ENCODE measurements at regions of chr6 and their contacts with region 1.

Region 1: GRCh38 chr6:31739639-31740396 is at the start of gene MSH5:
- DNase-seq: peak; percentile 98
- ATAC-seq: peak; percentile 87
- H3K4me3 Mint-ChIP-seq: peak within 1 kb of the TSS; percentile 96
- H3K27ac Mint-ChIP-seq: peak within 1 kb of the TSS; percentile 86
- H3K4me1 Mint-ChIP-seq: peaks cover 46% of the 10 kb centered on the region
- H3K27me3 Mint-ChIP-seq: no peaks in the 10 kb centered on the region
- total RNA-seq, gene MSH5: 92.1 to 126 TPM

Region 2: DNA sequence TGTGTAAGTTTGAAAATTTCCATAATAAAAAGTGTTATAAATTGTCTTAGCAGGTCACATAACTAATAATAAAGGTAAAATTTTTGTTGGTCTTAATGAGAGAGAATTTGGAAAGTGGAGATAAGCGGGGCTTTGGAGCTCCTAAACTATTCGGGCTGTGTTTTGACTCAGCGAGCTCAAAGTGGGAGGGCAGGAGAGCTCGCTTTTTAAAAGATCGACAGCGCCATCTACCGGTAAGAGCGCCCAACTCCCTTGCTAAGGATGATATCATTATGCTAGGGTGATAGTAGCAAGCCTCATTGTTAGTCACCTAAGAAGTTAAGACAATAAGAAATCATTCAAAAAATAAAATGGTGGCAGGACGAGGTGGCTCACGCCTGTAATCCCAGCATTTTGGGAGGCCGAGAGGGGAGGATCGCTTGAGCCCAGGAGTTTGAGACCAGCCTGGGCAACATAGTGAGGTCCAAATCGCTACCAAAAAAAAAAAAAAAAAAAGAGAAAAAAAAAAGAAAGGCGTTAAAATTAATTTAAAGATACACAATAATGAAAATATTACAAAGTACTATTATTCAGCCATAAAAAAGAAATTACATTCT is 652.2 kb before region 1 on chr6:
- CTCF ChIA-PET with region 1: no interaction called
- POLR2A ChIA-PET with region 1: no interaction called
- intact Hi-C with region 1: no loop called
- DNase-seq: peak; percentile 94
- ATAC-seq: peak; percentile 96
- H3K4me3 Mint-ChIP-seq: no peak overlapping the region
- H3K27ac Mint-ChIP-seq: no peak overlapping the region
- H3K4me1 Mint-ChIP-seq: peaks cover 13% of the 10 kb centered on the region
- H3K27me3 Mint-ChIP-seq: no peaks in the 10 kb centered on the region

Region 3: DNA sequence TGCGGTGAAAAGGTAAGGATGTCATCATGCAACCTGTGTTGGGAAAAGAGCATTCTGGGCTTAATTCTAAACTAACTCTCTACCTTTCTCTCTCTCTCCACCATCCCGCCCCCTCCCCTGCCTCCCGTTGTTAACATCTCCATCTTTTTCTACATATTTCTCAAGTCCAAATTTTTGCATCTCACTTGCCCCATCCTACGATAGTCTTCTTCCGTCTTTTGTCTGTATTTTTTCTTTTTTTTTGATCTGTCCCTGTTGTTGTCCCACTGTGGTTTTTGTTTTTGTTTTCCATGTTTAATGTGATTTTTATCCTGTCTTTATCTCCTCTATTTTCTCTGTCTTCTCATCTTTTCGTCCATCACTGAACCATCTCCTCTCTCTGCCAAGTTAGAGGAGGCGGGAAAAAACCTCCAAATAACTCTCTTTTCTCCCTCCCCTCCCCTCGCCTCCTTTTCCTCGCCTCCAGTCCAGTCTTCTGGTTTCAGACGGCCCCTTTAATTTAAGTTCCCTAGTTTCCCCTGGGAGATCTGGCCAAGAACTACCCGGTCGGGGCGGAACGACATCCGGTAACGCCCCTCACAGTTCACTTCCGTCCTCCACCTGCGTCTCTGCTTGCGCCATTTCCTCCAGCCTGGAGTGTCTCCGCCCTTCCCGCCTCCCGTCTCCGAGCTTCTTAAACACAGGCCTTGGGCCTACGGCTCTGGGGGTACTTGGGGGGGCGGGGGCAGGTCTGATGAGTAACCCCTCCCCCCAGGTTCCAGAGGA is 192.7 kb before region 1 on chr6 and contains the start of gene NFKBIL1:
- CTCF ChIA-PET with region 1: interaction called, 5 read pairs
- POLR2A ChIA-PET with region 1: no interaction called
- intact Hi-C with region 1: loop called in 1 of 2 experiments (anchors 2 kb)
- DNase-seq: peak; percentile 95
- ATAC-seq: peak; percentile 77
- H3K4me3 Mint-ChIP-seq: peak within 1 kb of the TSS; percentile 89
- H3K27ac Mint-ChIP-seq: peak within 1 kb of the TSS; percentile 97
- H3K4me1 Mint-ChIP-seq: peaks cover 51% of the 10 kb centered on the region
- H3K27me3 Mint-ChIP-seq: no peaks in the 10 kb centered on the region
- total RNA-seq, gene NFKBIL1: 18.1 to 19.0 TPM

Region 4: DNA sequence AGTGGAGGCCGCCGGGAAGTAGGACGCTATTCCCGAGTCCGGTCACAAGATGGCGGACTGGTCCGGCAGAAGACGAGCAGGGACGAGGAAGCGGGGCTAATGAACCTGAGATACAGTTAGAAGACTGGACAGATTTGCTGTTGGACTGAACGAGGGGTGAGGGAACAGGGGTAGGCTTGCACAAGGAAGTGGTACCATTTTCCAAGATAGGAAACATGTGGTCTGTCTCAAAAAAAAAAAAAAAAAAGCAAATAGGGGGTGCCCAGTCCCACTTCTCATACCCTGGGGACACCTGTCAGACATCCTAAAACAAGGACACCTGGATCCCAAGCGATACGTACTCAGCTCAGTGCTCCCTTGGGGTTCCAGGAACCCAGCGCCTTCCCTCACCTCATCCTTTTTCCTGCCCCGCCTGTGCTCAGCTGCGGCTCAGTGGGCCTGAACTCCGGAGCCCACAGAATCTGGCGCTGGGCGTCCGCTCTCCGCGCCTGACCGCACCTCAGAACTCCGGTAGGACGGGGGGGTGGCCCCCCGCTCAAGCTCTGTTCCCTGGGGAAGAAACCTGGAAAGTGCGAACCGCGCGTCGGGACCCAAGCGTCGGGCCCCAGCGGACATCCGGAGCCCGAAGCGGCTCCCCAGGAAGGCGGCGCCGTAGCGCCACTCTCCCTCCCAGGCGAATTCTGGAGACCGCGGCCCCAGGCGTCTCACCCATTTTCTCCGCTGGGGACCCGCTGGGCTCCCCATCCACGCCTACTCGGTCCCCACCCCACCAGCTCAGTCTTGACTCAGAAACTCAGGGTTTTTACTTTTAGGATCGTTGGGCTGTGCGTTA is 58.8 kb before region 1 on chr6 and contains the start of gene LY6G5C:
- CTCF ChIA-PET with region 1: no interaction called
- POLR2A ChIA-PET with region 1: interaction called, 3 read pairs
- intact Hi-C with region 1: loop called (anchors 2 kb)
- DNase-seq: peak; percentile 80
- ATAC-seq: peak; percentile 80
- H3K4me3 Mint-ChIP-seq: peak within 1 kb of the TSS; percentile 66
- H3K27ac Mint-ChIP-seq: peak within 1 kb of the TSS; percentile 49
- H3K4me1 Mint-ChIP-seq: peaks cover 15% of the 10 kb centered on the region
- H3K27me3 Mint-ChIP-seq: no peaks in the 10 kb centered on the region
- total RNA-seq, gene LY6G5C: 1.2 to 1.5 TPM

Region 5: DNA sequence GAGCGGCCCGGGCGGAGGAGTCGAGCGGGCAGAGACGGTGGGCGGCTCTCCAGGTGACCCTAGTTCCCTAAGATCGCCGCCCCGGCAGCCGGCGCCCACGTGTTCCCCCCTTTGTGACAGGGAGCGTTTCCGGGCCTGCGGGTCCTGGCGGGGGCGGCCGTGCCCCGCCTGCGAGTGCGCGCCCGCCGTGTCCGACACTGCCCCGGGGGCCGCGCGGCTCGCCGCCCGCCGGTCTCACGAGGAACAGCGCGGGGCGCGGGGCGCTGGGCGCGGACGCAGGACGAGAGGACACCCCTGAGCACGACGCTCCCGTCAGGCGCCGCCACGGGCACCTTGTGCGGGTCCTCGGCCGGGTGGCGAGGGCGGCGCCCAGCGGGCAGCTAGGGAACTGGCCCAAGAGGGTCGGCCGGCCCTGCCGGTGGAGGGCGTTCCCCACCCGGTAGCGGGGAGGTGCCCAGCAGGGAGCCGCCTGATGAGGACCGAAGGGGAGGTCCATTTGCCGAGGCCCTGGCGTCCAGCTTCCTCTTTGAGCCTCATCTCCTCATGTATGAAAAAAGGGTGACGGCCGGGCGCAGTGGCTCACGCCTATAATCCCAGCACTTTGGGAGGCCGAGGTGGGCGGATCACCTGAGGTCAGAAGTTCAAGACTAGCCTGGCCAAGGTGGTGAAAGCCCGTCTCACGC is 55.9 kb after region 1 on chr6 and contains the start of gene VARS1:
- CTCF ChIA-PET with region 1: interaction called, 15 read pairs
- POLR2A ChIA-PET with region 1: no interaction called
- intact Hi-C with region 1: loop called (anchors 1 to 2 kb)
- DNase-seq: peak; percentile 92
- ATAC-seq: peak; percentile 82
- H3K4me3 Mint-ChIP-seq: peak within 1 kb of the TSS; percentile 95
- H3K27ac Mint-ChIP-seq: peak within 1 kb of the TSS; percentile 95
- H3K4me1 Mint-ChIP-seq: peaks cover 47% of the 10 kb centered on the region
- H3K27me3 Mint-ChIP-seq: no peaks in the 10 kb centered on the region
- total RNA-seq, gene VARS1: 147 to 169 TPM

Region 6: GRCh38 chr6:31834434-31835198 is 94.8 kb after region 1 on chr6:
- CTCF ChIA-PET with region 1: interaction called, 9 read pairs
- POLR2A ChIA-PET with region 1: no interaction called
- intact Hi-C with region 1: loop called (anchors 1 to 2 kb)
- DNase-seq: peak; percentile 85
- ATAC-seq: peak; percentile 63
- H3K4me3 Mint-ChIP-seq: peak overlapping the region; percentile 90
- H3K27ac Mint-ChIP-seq: peak overlapping the region; percentile 95
- H3K4me1 Mint-ChIP-seq: peaks cover 40% of the 10 kb centered on the region
- H3K27me3 Mint-ChIP-seq: no peaks in the 10 kb centered on the region

Region 7: GRCh38 chr6:32177788-32178546 is 438.1 kb after region 1 on chr6 and contains the start of gene RNF5:
- CTCF ChIA-PET with region 1: interaction called, 3 read pairs
- POLR2A ChIA-PET with region 1: no interaction called
- intact Hi-C with region 1: loop called in 1 of 2 experiments (anchors 5 kb)
- DNase-seq: peak; percentile 96
- ATAC-seq: peak; percentile 89
- H3K4me3 Mint-ChIP-seq: peak within 1 kb of the TSS; percentile 92
- H3K27ac Mint-ChIP-seq: peak within 1 kb of the TSS; percentile 98
- H3K4me1 Mint-ChIP-seq: peaks cover 70% of the 10 kb centered on the region
- H3K27me3 Mint-ChIP-seq: no peaks in the 10 kb centered on the region
- total RNA-seq, gene RNF5: 51.7 to 65.6 TPM